ENCODE measurements at regions of chr15 and their contacts with region 1.

Region 1: GRCh38 chr15:75483961-75484360 is 32.5 kb upstream of the SIN3A start:
- DNase-seq: no peak

Region 2: DNA sequence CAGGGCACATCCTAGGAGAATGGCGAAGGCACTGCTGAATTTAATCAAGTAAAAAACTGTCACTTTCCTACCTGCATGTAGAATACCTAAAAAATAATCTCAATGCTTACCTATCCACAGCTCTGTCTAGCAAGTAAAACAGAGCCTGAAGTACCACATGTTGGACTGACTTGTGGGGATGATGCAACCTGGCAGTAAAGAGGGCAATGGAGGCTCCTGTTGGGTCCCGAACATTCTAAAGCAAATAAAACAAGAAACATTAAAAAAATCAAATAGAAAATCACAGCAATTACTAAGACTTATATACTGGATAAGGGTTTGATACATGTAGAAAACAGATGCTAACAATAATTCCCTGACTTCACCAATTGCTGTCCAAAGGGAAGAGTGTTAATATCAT is 39.0 kb after region 1 on chr15:
- intact Hi-C with region 1: loop called in 1 of 2 experiments (anchors 1 kb)
- DNase-seq: no peak

Measured in posterior vena cava (tissue), 2 donors.